CD14-positive monocyte (primary cell): ENCODE measurements at regions of chr1 and their contacts with region 1.

Region 1: GRCh38 chr1:178282949-178283367 is 189.1 kb downstream of the RASAL2 start:
- DNase-seq: peak; percentile 45 to 80 (median 73)
- H3K4me3 ChIP-seq: peak overlapping the region in 1 of 3 experiments; percentile 58
- H3K4me3 Mint-ChIP-seq: peak overlapping the region; percentile 53 to 83
- H3K27ac ChIP-seq: peak overlapping the region in 1 of 2 donors; percentile 66
- H3K27ac Mint-ChIP-seq: peak overlapping the region; percentile 83 to 93 (median 87)
- H3K4me1 ChIP-seq: peaks cover 41 to 42% of the 10 kb centered on the region in 2 donors
- H3K4me1 Mint-ChIP-seq: peaks cover 48% of the 10 kb centered on the region
- H3K27me3 ChIP-seq: no peaks in the 10 kb centered on the region
- H3K27me3 Mint-ChIP-seq: no peaks in the 10 kb centered on the region
- CTCF ChIP-seq: peak; percentile 53

Region 2: DNA sequence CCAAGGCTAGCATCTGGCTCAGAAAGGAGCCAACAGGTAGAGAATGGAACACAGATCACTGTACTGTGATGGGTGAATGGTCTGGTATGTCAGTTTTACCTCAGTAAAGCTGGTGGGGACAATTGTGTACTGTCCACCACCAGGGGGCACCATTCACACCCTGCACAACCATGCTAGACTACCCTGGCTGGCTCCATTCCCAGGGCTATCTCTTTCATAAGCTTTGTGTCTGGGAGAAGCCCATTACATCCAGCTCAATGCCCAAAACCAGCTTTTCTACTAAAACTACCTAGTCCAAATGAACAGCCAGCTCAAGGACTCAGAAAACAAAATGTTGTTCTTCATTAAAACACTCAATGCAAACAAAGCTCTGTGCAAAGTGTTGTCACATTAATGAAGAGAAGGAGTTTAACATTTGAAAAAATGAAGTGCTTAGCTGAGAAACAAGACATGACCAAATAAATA is 251.1 kb before region 1 on chr1:
- intact Hi-C with region 1: loop called (anchors 10 kb)
- DNase-seq: peak; percentile 48 to 64 (median 60)
- H3K4me3 ChIP-seq: no peak overlapping the region
- H3K4me3 Mint-ChIP-seq: no peak overlapping the region
- H3K27ac ChIP-seq: no peak overlapping the region
- H3K27ac Mint-ChIP-seq: no peak overlapping the region
- H3K4me1 ChIP-seq: no peaks in the 10 kb centered on the region
- H3K4me1 Mint-ChIP-seq: peaks cover 3% of the 10 kb centered on the region
- H3K27me3 ChIP-seq: no peaks in the 10 kb centered on the region
- H3K27me3 Mint-ChIP-seq: peaks cover 0 to 3% (median under 1%) of the 10 kb centered on the region in 3 donors
- CTCF ChIP-seq: peak; percentile 92

Region 3: GRCh38 chr1:178388418-178389145 is 105.6 kb after region 1 on chr1:
- intact Hi-C with region 1: no loop called
- DNase-seq: no peak
- H3K4me3 ChIP-seq: no peak overlapping the region
- H3K4me3 Mint-ChIP-seq: no peak overlapping the region
- H3K27ac ChIP-seq: no peak overlapping the region
- H3K27ac Mint-ChIP-seq: no peak overlapping the region
- H3K4me1 ChIP-seq: no peaks in the 10 kb centered on the region
- H3K4me1 Mint-ChIP-seq: no peaks in the 10 kb centered on the region
- H3K27me3 ChIP-seq: no peaks in the 10 kb centered on the region
- H3K27me3 Mint-ChIP-seq: peaks cover 0 to 3% (median 0%) of the 10 kb centered on the region in 3 donors
- CTCF ChIP-seq: no peak